Activated CD8-positive, alpha-beta T cell treated with anti-CD3 and anti-CD28 coated beads for 36 hours (primary cell): ENCODE measurements at regions of chr2 and their contacts with region 1.

Region 1: GRCh38 chr2:199979832-199980628 is 24.6 kb downstream of the MAIP1 start:
- DNase-seq: peak; percentile 93
- ATAC-seq: peak; percentile 45
- H3K4me3 Mint-ChIP-seq: no peak overlapping the region
- H3K27ac Mint-ChIP-seq: no peak overlapping the region
- H3K4me1 Mint-ChIP-seq: peaks cover 18% of the 10 kb centered on the region
- H3K27me3 Mint-ChIP-seq: no peaks in the 10 kb centered on the region
- CTCF ChIP-seq: peak; percentile 75

Region 2: DNA sequence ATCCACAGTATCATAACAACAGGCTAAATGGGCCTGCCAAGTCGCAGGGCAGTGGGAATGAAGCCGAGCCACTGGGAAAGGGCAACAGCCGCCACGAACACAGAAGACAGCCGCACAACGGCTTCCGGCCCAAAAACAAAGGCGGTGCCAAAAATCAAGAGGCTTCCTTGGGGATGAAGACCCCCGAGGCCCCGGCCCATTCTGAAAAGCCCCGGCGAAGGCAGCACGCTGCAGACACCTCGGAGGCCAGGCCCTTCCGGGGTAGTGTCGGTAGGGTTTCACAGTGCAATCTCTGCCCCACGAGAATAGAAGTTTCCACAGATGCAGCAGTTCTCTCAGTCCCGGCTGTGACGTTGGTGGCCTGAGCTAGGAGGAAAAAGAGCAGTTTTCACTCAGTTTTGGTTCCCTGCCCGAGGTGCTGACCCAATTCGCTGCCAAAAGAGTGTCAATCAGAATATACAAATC is 497.7 kb after region 1 on chr2:
- CTCF ChIA-PET with region 1: interaction called, 41 read pairs
- POLR2A ChIA-PET with region 1: no interaction called
- intact Hi-C with region 1: loop called (anchors 5 kb)
- DNase-seq: no peak
- ATAC-seq: no peak
- H3K4me3 Mint-ChIP-seq: no peak overlapping the region
- H3K27ac Mint-ChIP-seq: no peak overlapping the region
- H3K4me1 Mint-ChIP-seq: no peaks in the 10 kb centered on the region
- H3K27me3 Mint-ChIP-seq: no peaks in the 10 kb centered on the region
- CTCF ChIP-seq: no peak